Endothelial cell of umbilical vein (primary cell): ENCODE measurements at regions of chr7 and their contacts with region 1.

Region 1: DNA sequence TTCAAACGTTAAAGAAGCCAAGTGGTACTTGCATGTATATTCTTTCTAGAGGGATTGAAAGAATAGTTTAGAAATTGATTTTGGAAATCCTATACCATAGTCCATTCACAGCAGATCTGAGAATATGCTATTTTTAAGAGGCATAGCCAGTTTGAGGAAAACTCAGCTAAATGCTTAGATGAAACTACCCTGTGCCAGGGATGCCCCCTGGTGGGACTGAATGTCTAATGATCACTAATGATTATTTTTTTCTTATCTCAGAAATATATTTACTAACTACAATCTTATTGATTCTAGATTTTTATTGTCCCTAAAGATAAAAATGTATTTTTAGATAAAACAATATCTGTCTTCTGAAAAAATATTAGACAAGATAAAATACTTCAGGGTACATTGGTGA is 844.9 kb upstream of the PHF14 start:
- DNase-seq: no peak
- H3K4me3 ChIP-seq: no peak overlapping the region
- H3K27ac ChIP-seq: no peak overlapping the region
- H3K4me1 ChIP-seq: no peaks in the 10 kb centered on the region
- H3K27me3 ChIP-seq: no peaks in the 10 kb centered on the region
- CTCF ChIP-seq: peak; percentile 21 to 23
- POLR2A ChIP-seq: no peak

Region 2: DNA sequence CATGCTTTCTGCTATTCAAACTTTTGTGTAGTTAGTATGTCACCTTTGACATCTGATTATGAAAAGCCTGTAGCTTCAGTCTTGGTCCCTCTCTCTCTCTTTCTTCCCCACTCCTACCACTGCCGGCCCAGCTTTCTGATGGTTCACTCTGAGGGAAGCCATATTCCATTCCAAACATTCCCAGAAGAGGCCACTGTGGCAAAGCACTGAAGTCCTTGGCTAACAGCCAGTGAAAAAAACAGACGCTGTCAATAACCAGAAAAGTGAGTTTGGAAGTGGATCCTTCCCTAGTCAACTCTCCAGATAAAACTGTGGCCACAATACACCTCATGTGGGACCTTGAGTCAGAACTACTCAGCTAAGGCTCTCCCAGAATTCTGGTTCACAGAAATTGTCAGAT is 105.8 kb before region 1 on chr7:
- CTCF ChIA-PET with region 1: interaction called, 9 read pairs
- POLR2A ChIA-PET with region 1: no interaction called
- dilution Hi-C with region 1: no loop called
- intact Hi-C with region 1: loop called (anchors 5 kb)
- DNase-seq: peak; percentile 59
- H3K4me3 ChIP-seq: no peak overlapping the region
- H3K27ac ChIP-seq: no peak overlapping the region
- H3K4me1 ChIP-seq: no peaks in the 10 kb centered on the region
- H3K27me3 ChIP-seq: no peaks in the 10 kb centered on the region
- CTCF ChIP-seq: peak; percentile 25 to 52
- POLR2A ChIP-seq: no peak